HEK293 (cell line): ENCODE measurements at regions of chr11 and their contacts with region 1.

Region 1: DNA sequence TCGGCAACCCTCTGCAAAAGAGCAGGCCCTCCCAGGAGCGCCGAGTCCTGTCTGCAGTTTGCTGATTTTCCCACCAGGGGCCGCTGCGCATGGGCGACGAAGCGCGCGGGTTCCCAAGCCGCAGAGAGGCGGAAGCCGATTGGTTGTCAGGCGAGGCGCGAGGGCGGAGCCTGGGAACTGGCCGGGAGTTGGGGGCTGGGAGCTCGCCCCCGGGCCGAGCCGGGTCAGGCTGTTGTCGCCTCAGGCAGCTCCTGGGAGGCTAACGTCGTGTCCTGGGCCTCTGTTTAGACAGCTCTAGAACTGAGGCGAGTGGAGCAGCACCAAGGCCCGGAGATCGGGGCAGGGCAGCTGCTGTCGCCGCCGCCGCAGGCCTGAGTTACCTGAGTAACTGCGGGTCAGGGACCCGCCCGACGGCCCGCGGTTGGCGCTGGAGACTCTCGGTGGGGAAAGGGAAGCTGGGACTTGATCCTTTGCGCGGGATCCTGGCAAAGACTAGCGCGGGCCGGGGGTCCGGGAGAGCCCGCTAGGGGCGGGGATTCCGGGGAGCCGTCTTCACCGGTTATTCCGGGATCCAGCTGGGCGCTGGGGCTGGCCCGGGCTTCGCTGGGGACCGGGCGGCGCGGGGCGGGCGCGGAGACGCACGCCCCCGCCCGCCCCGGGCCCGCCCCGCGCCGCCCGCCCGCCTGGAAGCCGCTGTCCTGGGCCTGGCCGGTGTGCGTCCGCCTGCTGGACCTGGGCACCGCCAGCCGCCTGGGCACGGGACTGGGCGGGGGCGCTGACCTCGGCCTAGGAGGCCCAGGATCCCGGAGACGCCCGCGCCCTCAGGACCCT is at the start of gene STIM1:
- H3K4me3 ChIP-seq: peak within 1 kb of the TSS; percentile 87
- H3K27ac ChIP-seq: peak within 1 kb of the TSS; percentile 77
- H3K4me1 ChIP-seq: no peaks in the 10 kb centered on the region
- CTCF ChIP-seq: peak; percentile 89

Region 2: GRCh38 chr11:3609416-3610265 is 245.6 kb before region 1 on chr11:
- CTCF ChIA-PET with region 1: no interaction called
- POLR2A ChIA-PET with region 1: no interaction called
- H3K4me3 ChIP-seq: no peak overlapping the region
- H3K27ac ChIP-seq: no peak overlapping the region
- H3K4me1 ChIP-seq: no peaks in the 10 kb centered on the region
- CTCF ChIP-seq: peak; percentile 33; the same call in 1 of the 2 replicates

Region 3: GRCh38 chr11:3834664-3835461 is 20.3 kb before region 1 on chr11:
- CTCF ChIA-PET with region 1: interaction called, 42 read pairs
- POLR2A ChIA-PET with region 1: interaction called, 45 read pairs
- H3K4me3 ChIP-seq: no peak overlapping the region
- H3K27ac ChIP-seq: no peak overlapping the region
- H3K4me1 ChIP-seq: no peaks in the 10 kb centered on the region
- CTCF ChIP-seq: no peak

Region 4: DNA sequence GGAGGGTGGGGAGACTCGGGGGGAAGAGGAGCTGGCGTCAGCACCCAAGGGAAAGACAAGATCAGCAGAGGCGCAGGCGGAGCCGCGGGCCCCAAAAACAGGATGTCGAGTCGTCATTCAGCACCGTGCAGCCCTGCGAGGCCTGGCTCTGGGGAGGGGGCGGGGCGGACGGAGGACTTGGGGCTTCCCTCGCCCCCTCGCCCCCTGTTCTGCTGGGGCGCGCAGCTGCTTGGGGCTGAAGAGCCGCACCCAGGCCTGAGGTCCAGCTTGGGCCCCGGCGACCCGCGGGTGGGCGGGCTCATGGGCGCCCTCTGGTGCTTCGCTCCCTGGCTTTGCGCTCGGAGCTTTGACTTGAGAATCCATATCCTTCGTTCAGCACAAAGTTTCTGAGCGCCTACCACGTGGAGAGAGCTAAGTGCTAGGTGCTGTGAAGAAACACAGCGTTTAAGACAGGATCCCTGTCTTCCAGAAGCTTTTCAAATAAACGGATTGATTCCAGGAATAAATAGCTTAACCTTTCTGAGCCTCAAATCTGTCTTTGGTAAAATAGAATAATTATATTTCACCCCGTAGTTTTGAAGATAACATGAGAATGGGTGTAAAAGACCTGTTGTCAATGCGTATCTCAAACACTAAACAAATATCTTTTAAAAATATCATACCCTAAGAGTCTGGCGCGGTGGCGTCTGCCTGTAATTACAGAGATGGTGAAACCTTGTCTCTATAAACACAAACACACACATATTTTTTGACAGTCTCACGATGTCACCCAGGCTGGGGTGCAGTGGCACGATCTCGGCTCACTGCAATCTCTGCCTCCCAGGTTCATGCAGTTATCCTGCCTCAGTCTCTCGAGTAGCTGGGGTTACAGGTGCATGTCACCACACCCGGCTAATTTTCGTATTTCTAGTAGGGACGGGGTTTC is 13.5 kb before region 1 on chr11:
- CTCF ChIA-PET with region 1: interaction called, 42 read pairs
- POLR2A ChIA-PET with region 1: interaction called, 45 read pairs
- H3K4me3 ChIP-seq: peak overlapping the region; percentile 67
- H3K27ac ChIP-seq: 0 out of 2 replicates have a peak overlapping the region, but pooled peaks have one; percentile 19
- H3K4me1 ChIP-seq: no peaks in the 10 kb centered on the region
- CTCF ChIP-seq: peak; percentile 82

Region 5: DNA sequence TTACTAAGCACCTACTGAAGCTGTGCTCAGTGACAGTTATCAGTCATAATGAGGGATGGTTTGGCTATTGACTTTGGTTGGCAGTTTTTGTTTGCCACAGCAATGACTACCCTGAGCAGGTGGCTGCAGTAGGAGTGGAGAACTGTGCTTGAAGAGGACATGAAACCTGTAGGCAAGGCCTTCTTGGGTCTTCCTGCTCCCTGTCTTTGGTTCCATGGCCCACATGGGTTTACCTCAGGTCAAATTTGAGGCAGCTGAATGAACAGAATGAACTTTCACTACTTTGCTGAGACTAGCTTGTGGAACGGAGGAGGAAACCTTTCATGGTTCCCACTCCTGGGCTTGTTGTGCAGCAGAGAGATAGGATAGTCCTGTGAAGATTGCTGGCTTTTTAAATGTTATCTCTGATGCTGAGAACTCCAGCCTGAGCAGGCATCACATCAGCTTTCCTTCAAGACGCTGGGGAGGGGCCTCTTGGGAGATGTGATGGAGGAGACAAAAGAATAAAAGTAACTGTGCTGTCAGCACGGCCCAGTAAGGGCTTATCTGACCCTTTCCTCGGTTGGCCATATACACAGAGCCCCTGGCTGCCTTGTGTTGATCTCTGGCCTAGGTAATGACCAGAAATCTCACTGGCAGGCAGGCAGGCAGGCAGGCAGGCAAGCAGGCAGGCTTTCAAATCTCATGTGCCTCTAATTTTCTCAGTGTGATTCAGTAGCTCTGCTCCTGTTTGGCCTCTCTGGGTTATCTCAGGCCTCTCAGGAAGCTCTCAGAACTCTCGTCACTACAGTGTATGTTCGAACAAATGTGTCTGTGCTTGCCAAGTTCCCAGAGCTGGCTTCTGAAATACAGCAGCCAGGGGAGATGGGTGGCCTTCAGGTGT is 12.3 kb after region 1 on chr11:
- CTCF ChIA-PET with region 1: interaction called, 95 read pairs
- POLR2A ChIA-PET with region 1: interaction called, 4 read pairs
- H3K4me3 ChIP-seq: no peak overlapping the region
- H3K27ac ChIP-seq: no peak overlapping the region
- H3K4me1 ChIP-seq: peaks cover 4% of the 10 kb centered on the region; the same call in 1 of the 2 replicates
- CTCF ChIP-seq: no peak

Region 6: GRCh38 chr11:3905080-3905953 is 50.1 kb after region 1 on chr11:
- CTCF ChIA-PET with region 1: interaction called, 11 read pairs
- POLR2A ChIA-PET with region 1: interaction called, 3 read pairs
- H3K4me3 ChIP-seq: no peak overlapping the region
- H3K27ac ChIP-seq: no peak overlapping the region
- H3K4me1 ChIP-seq: no peaks in the 10 kb centered on the region
- CTCF ChIP-seq: no peak

Region 7: GRCh38 chr11:3927133-3927796 is 72.1 kb after region 1 on chr11:
- CTCF ChIA-PET with region 1: interaction called, 17 read pairs
- POLR2A ChIA-PET with region 1: no interaction called
- H3K4me3 ChIP-seq: no peak overlapping the region
- H3K27ac ChIP-seq: no peak overlapping the region
- H3K4me1 ChIP-seq: no peaks in the 10 kb centered on the region
- CTCF ChIP-seq: no peak